ENCODE measurements at regions of chr14 and their contacts with region 1.

Region 1: GRCh38 chr14:89973234-89973823 is 17.6 kb downstream of the TDP1 start:
- DNase-seq: no peak
- H3K4me3 ChIP-seq: no peak overlapping the region
- CTCF ChIP-seq: peak; percentile 92

Region 2: GRCh38 chr14:89792489-89793366 is 180.6 kb before region 1 on chr14:
- CTCF ChIA-PET with region 1: no interaction called
- POLR2A ChIA-PET with region 1: no interaction called
- DNase-seq: no peak
- H3K4me3 ChIP-seq: no peak overlapping the region
- CTCF ChIP-seq: no peak

Region 3: GRCh38 chr14:89826596-89826995 is 146.7 kb before region 1 on chr14:
- CTCF ChIA-PET with region 1: no interaction called
- POLR2A ChIA-PET with region 1: no interaction called
- DNase-seq: no peak
- H3K4me3 ChIP-seq: no peak overlapping the region
- CTCF ChIP-seq: no peak

Region 4: DNA sequence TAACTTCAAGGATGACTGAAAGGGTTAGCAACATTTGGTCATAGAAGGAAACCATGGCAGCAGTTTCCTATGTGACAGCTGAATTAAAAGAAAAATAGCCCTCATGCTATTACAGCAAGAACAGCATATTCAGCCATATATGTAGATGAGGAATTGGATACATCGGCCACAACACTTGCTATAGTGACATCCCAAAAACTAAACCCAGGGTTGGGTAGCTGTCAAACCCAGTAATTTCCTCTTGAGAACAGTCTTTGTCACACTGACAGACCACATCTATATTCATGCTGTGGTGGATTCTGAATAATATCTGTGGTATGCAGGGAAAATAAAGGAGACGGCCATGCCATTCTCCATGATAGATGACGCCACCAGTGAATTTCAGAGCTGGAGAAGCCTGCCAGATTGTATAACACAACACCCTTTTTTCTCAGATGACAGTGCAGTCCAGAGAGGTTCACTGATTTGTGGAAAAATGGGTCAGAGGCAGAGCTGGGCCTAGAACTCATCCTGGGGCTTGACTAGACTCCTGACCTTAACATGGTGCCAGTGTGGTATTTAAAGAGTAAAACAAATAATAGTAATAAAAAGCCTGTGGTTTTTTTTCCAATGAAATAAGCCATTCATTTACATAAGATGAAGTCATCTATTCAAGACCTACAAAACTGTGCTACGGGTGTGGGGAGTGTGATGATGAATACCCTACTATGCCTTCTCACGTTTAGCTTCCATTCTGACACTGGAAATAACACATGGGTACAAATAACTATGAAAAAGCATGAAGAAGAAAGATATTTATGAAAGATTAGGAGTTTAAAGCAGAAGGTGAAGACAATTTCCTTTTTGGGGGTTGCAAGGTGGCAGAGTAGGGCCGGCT is 51.1 kb before region 1 on chr14:
- CTCF ChIA-PET with region 1: interaction called, 10 read pairs
- POLR2A ChIA-PET with region 1: no interaction called
- DNase-seq: no peak
- H3K4me3 ChIP-seq: no peak overlapping the region
- CTCF ChIP-seq: no peak

Region 5: DNA sequence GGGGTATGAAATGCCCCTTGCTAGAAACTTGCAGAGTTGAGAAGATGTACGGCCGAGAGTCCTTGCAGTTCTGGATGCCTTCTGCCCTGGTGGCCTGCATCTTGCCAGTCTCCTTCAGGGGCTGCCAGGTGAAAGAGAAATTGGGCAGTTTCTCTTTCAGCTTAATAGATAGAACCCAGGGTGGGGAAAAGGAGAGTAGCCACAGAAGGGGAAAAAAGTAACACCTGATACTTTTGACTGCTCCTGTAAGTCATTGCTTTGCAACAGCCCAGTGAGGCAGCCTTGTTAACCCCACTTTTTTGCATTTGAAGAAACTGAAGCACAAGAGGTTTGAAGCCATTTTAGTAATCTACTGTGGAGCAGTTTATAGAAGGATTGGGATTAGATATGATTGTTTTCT is 10.0 kb after region 1 on chr14:
- CTCF ChIA-PET with region 1: interaction called, 78 read pairs
- POLR2A ChIA-PET with region 1: no interaction called
- DNase-seq: no peak
- H3K4me3 ChIP-seq: no peak overlapping the region
- CTCF ChIP-seq: no peak

Region 6: DNA sequence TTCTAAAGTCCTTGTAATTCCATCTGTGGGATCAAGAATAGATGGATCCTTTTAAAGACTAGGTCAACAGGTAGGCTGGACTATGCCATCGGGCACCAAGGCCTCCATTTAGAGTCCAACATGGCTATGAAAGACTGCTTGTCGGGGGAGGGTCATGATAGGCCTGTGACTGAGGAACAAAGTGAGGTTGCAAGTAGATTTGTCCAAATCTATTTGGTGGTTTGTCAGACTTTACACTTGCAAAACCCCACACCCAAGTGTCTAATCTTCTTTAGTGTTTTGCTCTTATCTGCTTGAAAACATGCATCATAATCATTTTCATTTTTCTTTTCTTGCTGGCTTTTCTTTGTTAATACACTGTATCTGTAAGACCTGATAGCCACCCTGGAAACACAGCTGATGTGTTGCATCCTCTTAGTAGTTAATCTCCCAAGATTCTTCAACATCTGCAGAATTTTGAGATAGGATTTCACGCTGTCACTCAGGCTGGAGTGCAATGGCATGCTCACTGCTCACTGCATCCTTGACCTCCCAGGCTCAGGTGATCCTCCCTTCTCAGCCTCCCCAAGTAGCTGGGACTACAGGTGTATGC is 32.7 kb after region 1 on chr14:
- CTCF ChIA-PET with region 1: interaction called, 10 read pairs
- POLR2A ChIA-PET with region 1: no interaction called
- DNase-seq: no peak
- H3K4me3 ChIP-seq: no peak overlapping the region
- CTCF ChIP-seq: no peak

Region 7: GRCh38 chr14:90042496-90043252 is 69.3 kb after region 1 on chr14:
- CTCF ChIA-PET with region 1: interaction called, 10 read pairs
- POLR2A ChIA-PET with region 1: no interaction called
- DNase-seq: no peak
- H3K4me3 ChIP-seq: no peak overlapping the region
- CTCF ChIP-seq: no peak

Region 8: GRCh38 chr14:90193925-90194324 is 220.6 kb after region 1 on chr14:
- CTCF ChIA-PET with region 1: no interaction called
- POLR2A ChIA-PET with region 1: no interaction called
- DNase-seq: no peak
- H3K4me3 ChIP-seq: no peak overlapping the region
- CTCF ChIP-seq: no peak

Region 9: GRCh38 chr14:90256354-90257131 is 283.2 kb after region 1 on chr14 and contains the start of gene PSMC1:
- CTCF ChIA-PET with region 1: interaction called, 25 read pairs
- POLR2A ChIA-PET with region 1: no interaction called
- DNase-seq: peak; percentile 73
- H3K4me3 ChIP-seq: peak within 1 kb of the TSS; percentile 80
- CTCF ChIP-seq: no peak